GM10248 (cell line): ENCODE measurements at regions of chr16 and their contacts with region 1.

Region 1: DNA sequence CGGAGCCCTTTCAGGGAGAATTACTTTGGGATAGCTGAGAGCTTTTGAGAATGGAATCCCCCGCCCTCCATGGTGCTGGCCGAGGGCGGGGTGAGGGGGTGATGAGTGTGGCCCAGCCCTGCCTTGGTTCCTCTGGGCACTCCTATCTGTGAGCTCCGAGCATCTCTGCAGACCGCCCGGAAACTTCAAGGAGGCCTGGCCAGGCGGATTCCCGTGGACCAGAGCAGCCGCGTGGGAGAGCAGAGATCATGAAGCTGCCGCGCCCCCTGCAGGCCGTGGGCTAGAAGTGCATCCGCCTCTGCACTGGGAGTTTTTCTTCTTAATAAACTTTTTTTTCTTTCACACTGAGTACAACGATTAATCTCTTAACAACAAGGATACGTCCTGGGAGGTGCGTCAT is 392.9 kb upstream of the EEF2KMT start:
- DNase-seq: peak; percentile 28
- CTCF ChIP-seq: peak; percentile 43

Region 2: GRCh38 chr16:5479926-5480325 is 10.6 kb before region 1 on chr16:
- CTCF ChIA-PET with region 1: interaction called, 16 read pairs
- POLR2A ChIA-PET with region 1: no interaction called
- DNase-seq: no peak
- CTCF ChIP-seq: no peak